Testis (tissue), 5 donors: ENCODE measurements at regions of chr4 and their contacts with region 1.

Region 1: DNA sequence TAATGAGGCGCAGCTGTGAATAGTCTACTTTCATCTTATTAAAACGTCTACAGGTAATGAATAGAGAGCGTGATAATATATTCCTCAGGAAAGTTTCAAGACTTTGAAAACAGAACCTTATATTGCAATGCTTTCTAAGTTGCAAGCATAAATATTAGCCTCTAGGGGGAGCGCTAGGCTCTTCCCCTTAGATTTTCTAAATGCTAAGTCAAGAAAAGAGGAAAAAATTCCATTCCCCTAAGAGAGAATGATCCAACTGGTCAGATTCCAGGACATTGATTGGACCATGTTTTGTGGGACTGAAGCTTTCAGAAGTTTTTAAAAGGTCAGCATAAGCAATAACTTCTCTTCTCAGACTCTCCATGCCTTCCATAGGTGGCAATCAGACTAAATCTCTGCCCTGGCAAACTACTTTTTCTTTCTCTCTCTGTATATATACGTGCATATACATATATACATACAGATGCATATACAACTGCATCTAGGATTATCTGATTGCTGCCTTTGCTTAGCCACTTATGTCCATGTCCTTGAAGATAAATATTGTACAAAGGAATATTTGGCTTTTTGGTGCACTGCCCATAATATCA is 492.9 kb downstream of the INPP4B start:
- DNase-seq: peak; percentile 26
- H3K4me3 ChIP-seq: no peak overlapping the region
- H3K27ac ChIP-seq: peak overlapping the region in 1 of 2 donors; percentile 78
- H3K4me1 ChIP-seq: peaks cover 23% of the 10 kb centered on the region
- H3K27me3 ChIP-seq: no peaks in the 10 kb centered on the region
- CTCF ChIP-seq: peak; percentile 55 to 82 (median 60)
- POLR2A ChIP-seq: no peak

Region 2: GRCh38 chr4:141939361-141939760 is 413.9 kb before region 1 on chr4:
- intact Hi-C with region 1: no loop called
- DNase-seq: no peak
- H3K4me3 ChIP-seq: no peak overlapping the region
- H3K27ac ChIP-seq: no peak overlapping the region
- H3K4me1 ChIP-seq: no peaks in the 10 kb centered on the region
- H3K27me3 ChIP-seq: no peaks in the 10 kb centered on the region
- CTCF ChIP-seq: no peak
- POLR2A ChIP-seq: no peak

Region 3: GRCh38 chr4:142846729-142847596 is 493.7 kb after region 1 on chr4:
- intact Hi-C with region 1: loop called (anchors 10 kb)
- DNase-seq: peak; percentile 17
- H3K4me3 ChIP-seq: peak overlapping the region; percentile 61 to 75
- H3K27ac ChIP-seq: no peak overlapping the region
- H3K4me1 ChIP-seq: peaks cover 7% of the 10 kb centered on the region
- H3K27me3 ChIP-seq: no peaks in the 10 kb centered on the region
- CTCF ChIP-seq: no peak
- POLR2A ChIP-seq: no peak